ENCODE measurements at regions of chr6 and their contacts with region 1.

Region 1: GRCh38 chr6:35146453-35146852 is 5.3 kb upstream of the TCP11 start:
- DNase-seq: peak; percentile 49 to 69 (median 64)
- H3K4me3 ChIP-seq: no peak overlapping the region
- H3K27ac ChIP-seq: no peak overlapping the region
- H3K4me1 ChIP-seq: peaks cover 0 to 7% (median 5%) of the 10 kb centered on the region in 4 experiments
- H3K27me3 ChIP-seq: peaks cover 0 to 4% (median 0%) of the 10 kb centered on the region in 5 experiments

Region 2: DNA sequence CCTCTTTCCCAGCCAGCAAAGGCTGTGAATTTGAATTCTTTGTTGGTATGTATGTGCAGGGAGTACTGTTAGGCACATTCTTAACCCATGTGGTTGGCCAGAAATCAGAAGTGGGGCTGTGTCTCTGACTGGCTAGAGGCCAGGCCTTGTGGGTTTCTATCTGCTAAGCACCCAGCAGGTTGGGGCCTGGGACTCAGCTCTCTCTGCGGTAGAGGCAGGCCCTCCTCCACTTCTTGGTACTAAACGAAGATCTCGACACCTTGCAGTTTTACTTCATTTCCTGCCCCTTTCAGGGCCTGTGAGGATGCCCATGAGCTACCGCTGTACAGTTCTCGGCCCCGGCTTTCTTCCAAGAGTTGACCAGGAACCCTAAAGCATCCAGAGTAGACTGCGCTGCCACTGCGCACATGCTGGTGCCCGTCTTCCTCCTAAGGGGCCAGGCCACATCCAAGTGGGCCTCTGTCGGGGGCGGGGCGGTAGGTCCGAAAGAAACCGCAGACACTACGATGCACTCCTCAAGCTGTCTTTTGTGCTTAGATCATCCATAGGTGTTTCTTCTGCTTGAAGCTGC is 56.4 kb before region 1 on chr6:
- CTCF ChIA-PET with region 1: no interaction called
- POLR2A ChIA-PET with region 1: no interaction called
- DNase-seq: peak; percentile 54 to 90 (median 88)
- H3K4me3 ChIP-seq: no peak overlapping the region
- H3K27ac ChIP-seq: no peak overlapping the region
- H3K4me1 ChIP-seq: peaks cover 0 to 12% (median 6%) of the 10 kb centered on the region in 4 experiments
- H3K27me3 ChIP-seq: no peaks in the 10 kb centered on the region

Region 3: DNA sequence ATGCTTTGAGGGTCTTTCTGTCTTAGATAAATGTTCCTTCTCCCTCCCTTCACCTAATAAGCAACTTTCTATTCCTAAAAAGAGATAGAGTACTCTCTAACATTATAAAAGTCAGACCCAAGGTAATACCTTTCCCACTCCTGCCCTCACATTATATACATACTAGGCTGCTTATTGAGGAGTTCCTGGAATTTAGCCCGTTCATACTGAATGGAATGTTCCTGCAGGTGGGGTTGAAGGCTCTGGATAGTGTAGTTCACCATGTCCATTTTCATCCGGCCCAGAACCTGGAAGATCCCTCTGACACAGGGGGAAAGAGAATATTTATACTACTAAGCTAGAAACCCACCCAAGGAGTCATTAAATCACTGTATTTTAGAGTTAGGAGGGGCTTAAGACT is 25.7 kb before region 1 on chr6:
- CTCF ChIA-PET with region 1: no interaction called
- POLR2A ChIA-PET with region 1: no interaction called
- DNase-seq: no peak
- H3K4me3 ChIP-seq: no peak overlapping the region
- H3K27ac ChIP-seq: no peak overlapping the region
- H3K4me1 ChIP-seq: no peaks in the 10 kb centered on the region
- H3K27me3 ChIP-seq: no peaks in the 10 kb centered on the region

Region 4: DNA sequence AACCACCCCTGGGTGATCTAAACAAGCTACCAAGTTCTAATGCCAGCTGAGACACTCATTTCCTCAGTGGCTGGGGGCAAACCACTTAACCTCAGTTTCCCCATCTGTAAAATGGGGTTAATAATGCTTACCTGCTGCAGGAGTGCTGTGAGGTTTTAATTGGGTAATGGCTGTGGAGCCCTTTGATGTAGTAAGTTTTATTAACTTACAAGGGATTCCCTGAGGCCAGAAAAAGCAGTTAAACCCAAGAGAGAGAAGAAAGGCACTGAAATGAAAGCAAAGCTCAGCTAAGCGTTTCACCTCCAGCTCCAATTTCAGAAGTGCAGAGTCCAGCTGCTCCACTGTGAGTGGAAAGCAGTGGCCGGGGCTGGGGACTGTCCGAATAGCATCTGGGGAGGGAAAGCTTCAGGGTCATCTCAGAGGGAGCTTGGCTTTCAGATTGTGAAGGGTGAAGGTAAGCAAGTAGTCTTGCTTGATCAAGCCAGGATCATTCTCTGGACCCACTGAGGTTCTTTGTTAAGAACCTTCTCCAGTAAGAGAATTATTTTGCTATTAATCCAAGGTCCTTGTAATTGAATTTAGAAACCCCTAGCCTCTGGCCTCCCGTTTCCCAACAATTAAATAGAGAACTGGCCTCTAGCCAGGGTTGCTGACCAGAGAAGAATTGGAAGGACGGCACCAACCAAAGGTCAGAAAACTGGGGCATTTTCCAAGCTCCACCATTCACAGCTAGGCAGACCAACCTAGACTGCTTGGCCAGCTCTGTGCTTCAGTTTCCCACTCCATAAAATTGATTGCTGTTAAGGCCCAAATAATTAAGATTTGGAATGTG is 15.5 kb after region 1 on chr6:
- CTCF ChIA-PET with region 1: interaction called, 19 read pairs
- POLR2A ChIA-PET with region 1: no interaction called
- DNase-seq: no peak
- H3K4me3 ChIP-seq: no peak overlapping the region
- H3K27ac ChIP-seq: no peak overlapping the region
- H3K4me1 ChIP-seq: no peaks in the 10 kb centered on the region
- H3K27me3 ChIP-seq: peaks cover 0 to 5% (median 2%) of the 10 kb centered on the region in 5 experiments

Region 5: GRCh38 chr6:35230950-35231349 is 84.5 kb after region 1 on chr6:
- CTCF ChIA-PET with region 1: interaction called, 12 read pairs
- POLR2A ChIA-PET with region 1: no interaction called
- DNase-seq: no peak
- H3K4me3 ChIP-seq: no peak overlapping the region
- H3K27ac ChIP-seq: no peak overlapping the region
- H3K4me1 ChIP-seq: no peaks in the 10 kb centered on the region
- H3K27me3 ChIP-seq: no peaks in the 10 kb centered on the region